B cell (primary cell): ENCODE measurements at regions of chr2 and their contacts with region 1.

Region 1: GRCh38 chr2:73284296-73285158 is at the start of gene FBXO41:
- DNase-seq: peak; percentile 81
- ATAC-seq: peak; percentile 72
- H3K4me3 ChIP-seq: peak within 1 kb of the TSS; percentile 40 to 81 (median 75)
- H3K4me3 Mint-ChIP-seq: peak within 1 kb of the TSS; percentile 93
- H3K27ac ChIP-seq: peak within 1 kb of the TSS; percentile 80 to 81
- H3K27ac Mint-ChIP-seq: peak within 1 kb of the TSS; percentile 91
- H3K4me1 ChIP-seq: peaks cover 21 to 34% of the 10 kb centered on the region in 2 donors
- H3K4me1 Mint-ChIP-seq: peaks cover 32% of the 10 kb centered on the region
- H3K27me3 ChIP-seq: peaks cover 0 to 6% (median 0%) of the 10 kb centered on the region in 4 experiments
- H3K27me3 Mint-ChIP-seq: peaks cover 2% of the 10 kb centered on the region
- CTCF ChIP-seq: peak; percentile 3
- total RNA-seq, gene FBXO41: 23.7 and 25.2 TPM in 2 replicates

Region 2: GRCh38 chr2:73071360-73072133 is 213.0 kb before region 1 on chr2 and contains the start of gene SFXN5:
- CTCF ChIA-PET with region 1: no interaction called
- POLR2A ChIA-PET with region 1: no interaction called
- intact Hi-C with region 1: loop called (anchors 2 kb)
- DNase-seq: peak; percentile 98
- ATAC-seq: peak; percentile 90
- H3K4me3 ChIP-seq: peak within 1 kb of the TSS; percentile 51 to 99 (median 86)
- H3K4me3 Mint-ChIP-seq: peak within 1 kb of the TSS; percentile 93
- H3K27ac ChIP-seq: peak within 1 kb of the TSS; percentile 77 to 84
- H3K27ac Mint-ChIP-seq: peak within 1 kb of the TSS; percentile 95
- H3K4me1 ChIP-seq: peaks cover 6 to 17% of the 10 kb centered on the region in 2 donors
- H3K4me1 Mint-ChIP-seq: peaks cover 24% of the 10 kb centered on the region
- H3K27me3 ChIP-seq: no peaks in the 10 kb centered on the region
- H3K27me3 Mint-ChIP-seq: no peaks in the 10 kb centered on the region
- CTCF ChIP-seq: no peak
- total RNA-seq, gene SFXN5: 16.9 and 17.8 TPM in 2 replicates

Region 3: GRCh38 chr2:73268830-73269685 is 15.5 kb before region 1 on chr2:
- CTCF ChIA-PET with region 1: interaction called, 8 read pairs
- POLR2A ChIA-PET with region 1: no interaction called
- intact Hi-C with region 1: loop called (anchors 2 kb)
- DNase-seq: peak; percentile 74
- ATAC-seq: peak; percentile 85
- H3K4me3 ChIP-seq: peak overlapping the region in 2 of 5 experiments; percentile 19 to 33
- H3K4me3 Mint-ChIP-seq: peak overlapping the region; percentile 49
- H3K27ac ChIP-seq: no peak overlapping the region
- H3K27ac Mint-ChIP-seq: no peak overlapping the region
- H3K4me1 ChIP-seq: no peaks in the 10 kb centered on the region
- H3K4me1 Mint-ChIP-seq: peaks cover 18% of the 10 kb centered on the region
- H3K27me3 ChIP-seq: no peaks in the 10 kb centered on the region
- H3K27me3 Mint-ChIP-seq: no peaks in the 10 kb centered on the region
- CTCF ChIP-seq: peak; percentile 21

Region 4: DNA sequence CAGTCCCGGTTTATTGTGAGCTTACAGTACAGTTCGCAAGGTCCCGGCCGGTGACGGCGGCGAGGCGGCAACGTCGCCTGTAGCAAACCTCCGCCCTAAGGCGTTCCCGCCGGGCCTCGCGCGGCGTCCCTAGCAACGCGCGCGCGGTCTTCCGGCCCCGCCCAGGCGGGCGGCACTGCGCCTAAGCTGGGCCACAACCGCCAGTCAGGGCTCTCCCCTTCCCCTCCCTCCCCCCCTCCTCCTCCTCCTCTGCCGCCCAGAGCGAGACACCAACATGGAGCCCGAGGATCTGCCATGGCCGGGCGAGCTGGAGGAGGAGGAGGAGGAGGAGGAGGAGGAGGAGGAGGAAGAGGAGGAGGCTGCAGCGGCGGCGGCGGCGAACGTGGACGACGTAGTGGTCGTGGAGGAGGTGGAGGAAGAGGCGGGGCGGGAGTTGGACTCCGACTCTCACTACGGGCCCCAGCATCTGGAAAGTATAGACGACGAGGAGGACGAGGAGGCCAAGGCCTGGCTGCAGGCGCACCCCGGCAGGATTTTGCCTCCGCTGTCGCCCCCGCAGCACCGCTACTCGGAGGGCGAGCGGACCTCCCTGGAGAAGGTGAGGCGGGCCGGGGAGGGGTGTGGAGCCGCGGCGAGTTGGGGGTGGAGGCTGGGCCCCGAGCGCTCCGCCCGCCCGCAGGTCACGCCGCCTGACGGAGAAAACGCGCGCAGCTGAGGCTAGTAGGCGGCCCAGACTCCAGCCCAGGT is 101.2 kb after region 1 on chr2 and contains the start of gene ALMS1:
- CTCF ChIA-PET with region 1: no interaction called
- POLR2A ChIA-PET with region 1: interaction called, 4 read pairs
- intact Hi-C with region 1: loop called (anchors 2 kb)
- DNase-seq: peak; percentile 93
- ATAC-seq: peak; percentile 80
- H3K4me3 ChIP-seq: peak within 1 kb of the TSS; percentile 56 to 87 (median 82)
- H3K4me3 Mint-ChIP-seq: peak within 1 kb of the TSS; percentile 90
- H3K27ac ChIP-seq: peak within 1 kb of the TSS; percentile 80 to 82
- H3K27ac Mint-ChIP-seq: peak within 1 kb of the TSS; percentile 93
- H3K4me1 ChIP-seq: peaks cover 18 to 20% of the 10 kb centered on the region in 2 donors
- H3K4me1 Mint-ChIP-seq: peaks cover 23% of the 10 kb centered on the region
- H3K27me3 ChIP-seq: peaks cover 0 to 8% (median 4%) of the 10 kb centered on the region in 4 experiments
- H3K27me3 Mint-ChIP-seq: peaks cover 17% of the 10 kb centered on the region
- CTCF ChIP-seq: no peak
- total RNA-seq, gene ALMS1: 32.1 and 33.1 TPM in 2 replicates

Region 5: GRCh38 chr2:73536133-73536840 is 251.8 kb after region 1 on chr2:
- CTCF ChIA-PET with region 1: no interaction called
- POLR2A ChIA-PET with region 1: no interaction called
- intact Hi-C with region 1: no loop called
- DNase-seq: no peak
- ATAC-seq: no peak
- H3K4me3 ChIP-seq: no peak overlapping the region
- H3K4me3 Mint-ChIP-seq: no peak overlapping the region
- H3K27ac ChIP-seq: no peak overlapping the region
- H3K27ac Mint-ChIP-seq: no peak overlapping the region
- H3K4me1 ChIP-seq: no peaks in the 10 kb centered on the region
- H3K4me1 Mint-ChIP-seq: no peaks in the 10 kb centered on the region
- H3K27me3 ChIP-seq: no peaks in the 10 kb centered on the region
- H3K27me3 Mint-ChIP-seq: no peaks in the 10 kb centered on the region
- CTCF ChIP-seq: no peak